MCF 10A (cell line): ENCODE measurements at regions of chr1 and their contacts with region 1.

Region 1: GRCh38 chr1:181179987-181180365 is 91.5 kb downstream of the IER5 start:
- DNase-seq: peak; percentile 45
- H3K4me3 Mint-ChIP-seq: no peak overlapping the region
- H3K27ac Mint-ChIP-seq: no peak overlapping the region
- H3K4me1 Mint-ChIP-seq: peaks cover 9% of the 10 kb centered on the region
- H3K27me3 Mint-ChIP-seq: peaks cover 24% of the 10 kb centered on the region
- CTCF ChIP-seq: no peak

Region 2: GRCh38 chr1:181430015-181430885 is 250.3 kb after region 1 on chr1:
- CTCF ChIA-PET with region 1: interaction called, 271 read pairs
- POLR2A ChIA-PET with region 1: no interaction called
- intact Hi-C with region 1: no loop called
- DNase-seq: no peak
- H3K4me3 Mint-ChIP-seq: no peak overlapping the region
- H3K27ac Mint-ChIP-seq: no peak overlapping the region
- H3K4me1 Mint-ChIP-seq: no peaks in the 10 kb centered on the region
- H3K27me3 Mint-ChIP-seq: peaks cover 54% of the 10 kb centered on the region
- CTCF ChIP-seq: no peak